Activated CD4-positive, alpha-beta memory T cell treated with anti-CD3 and anti-CD28 coated beads, Interleukin-2, amount 10 ng/mL, durations not matched to agents 7 days and 5 days (primary cell): ENCODE measurements at regions of chr21 and their contacts with region 1.

Region 1: DNA sequence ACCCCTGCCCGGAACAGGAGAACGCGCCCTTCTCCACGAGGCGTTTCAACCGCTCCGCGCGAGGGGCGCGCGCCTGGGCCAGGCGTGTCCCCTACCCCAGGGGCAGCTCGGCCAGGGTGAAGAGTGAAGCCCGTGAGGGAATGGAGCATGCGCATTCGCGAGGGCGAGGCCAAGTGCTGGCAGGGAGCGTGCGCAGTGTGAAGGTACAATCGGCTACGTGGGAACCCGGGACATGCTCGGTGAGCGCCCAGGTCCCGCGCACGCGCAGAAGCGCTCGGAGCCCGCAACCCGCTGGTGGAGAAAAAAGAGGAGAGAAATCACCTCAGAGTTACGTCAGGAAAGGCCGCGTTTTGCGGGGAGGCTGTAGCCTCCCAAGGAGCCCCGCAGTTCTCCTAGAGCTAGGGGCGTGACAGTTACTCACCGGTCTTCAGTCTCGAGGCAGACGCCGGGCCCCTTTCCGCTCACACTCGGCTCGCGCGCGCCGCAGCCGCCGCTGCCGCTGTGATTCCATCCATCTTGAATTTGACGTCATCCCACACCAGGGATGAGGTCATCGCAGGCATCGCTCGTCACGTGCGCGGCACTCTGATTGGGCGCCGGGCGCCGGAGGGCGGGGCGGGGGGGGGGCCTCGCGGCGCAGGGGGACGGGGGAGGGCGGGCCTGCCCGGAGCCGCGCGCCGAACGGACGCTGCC is at the start of gene ZBTB21:
- DNase-seq: peak; percentile 98
- H3K4me3 Mint-ChIP-seq: peak within 1 kb of the TSS; percentile 88
- H3K27ac Mint-ChIP-seq: peak within 1 kb of the TSS; percentile 96
- H3K4me1 Mint-ChIP-seq: peaks cover 22% of the 10 kb centered on the region
- H3K27me3 Mint-ChIP-seq: peaks cover 33% of the 10 kb centered on the region
- total RNA-seq, gene ZBTB21: 18.0 to 18.4 TPM

Region 2: DNA sequence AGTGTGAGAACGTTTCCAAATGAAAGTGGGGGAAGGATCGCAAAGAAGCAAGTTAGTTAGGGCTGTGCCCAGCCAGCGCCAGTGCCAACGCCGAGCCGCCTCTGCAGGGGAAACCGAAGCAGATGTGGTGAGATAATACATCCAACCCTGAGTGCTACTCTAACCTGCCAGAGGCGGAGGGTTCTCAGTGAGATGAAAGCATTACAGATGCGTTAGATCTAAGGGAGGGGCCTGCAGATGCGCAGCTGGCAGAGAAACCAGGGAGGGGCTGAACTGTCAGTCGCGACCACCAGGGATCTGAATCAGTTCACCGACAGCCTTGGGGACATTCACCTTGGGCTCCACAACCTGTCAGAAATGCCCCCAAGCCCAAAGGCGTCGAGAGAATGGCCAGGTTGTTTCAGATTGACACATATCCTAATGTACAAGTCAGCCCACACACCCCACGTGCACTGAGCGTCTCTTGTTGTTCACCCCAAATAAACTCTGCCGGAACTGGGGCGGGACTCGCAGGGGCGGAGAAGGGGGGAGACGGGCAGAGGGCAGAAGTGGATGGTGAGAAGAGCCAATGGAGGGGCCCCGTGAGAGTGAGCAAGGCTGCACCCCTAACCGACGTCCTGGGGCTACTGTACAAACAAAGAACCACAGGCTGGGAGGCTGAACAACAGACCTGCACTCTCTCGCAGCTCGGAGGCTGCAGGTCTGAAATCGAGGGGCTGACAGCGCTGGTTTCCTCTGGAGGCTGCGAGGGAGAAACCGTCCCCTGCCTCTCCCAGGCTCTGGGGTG is 52.5 kb after region 1 on chr21:
- CTCF ChIA-PET with region 1: no interaction called
- POLR2A ChIA-PET with region 1: interaction called, 28 read pairs
- DNase-seq: peak; percentile 88
- H3K4me3 Mint-ChIP-seq: peak overlapping the region; percentile 74
- H3K27ac Mint-ChIP-seq: peak overlapping the region; percentile 98
- H3K4me1 Mint-ChIP-seq: peaks cover 47% of the 10 kb centered on the region
- H3K27me3 Mint-ChIP-seq: peaks cover 6% of the 10 kb centered on the region